Psoas muscle (tissue), 8 donors: ENCODE measurements at regions of chr1 and their contacts with region 1.

Region 1: DNA sequence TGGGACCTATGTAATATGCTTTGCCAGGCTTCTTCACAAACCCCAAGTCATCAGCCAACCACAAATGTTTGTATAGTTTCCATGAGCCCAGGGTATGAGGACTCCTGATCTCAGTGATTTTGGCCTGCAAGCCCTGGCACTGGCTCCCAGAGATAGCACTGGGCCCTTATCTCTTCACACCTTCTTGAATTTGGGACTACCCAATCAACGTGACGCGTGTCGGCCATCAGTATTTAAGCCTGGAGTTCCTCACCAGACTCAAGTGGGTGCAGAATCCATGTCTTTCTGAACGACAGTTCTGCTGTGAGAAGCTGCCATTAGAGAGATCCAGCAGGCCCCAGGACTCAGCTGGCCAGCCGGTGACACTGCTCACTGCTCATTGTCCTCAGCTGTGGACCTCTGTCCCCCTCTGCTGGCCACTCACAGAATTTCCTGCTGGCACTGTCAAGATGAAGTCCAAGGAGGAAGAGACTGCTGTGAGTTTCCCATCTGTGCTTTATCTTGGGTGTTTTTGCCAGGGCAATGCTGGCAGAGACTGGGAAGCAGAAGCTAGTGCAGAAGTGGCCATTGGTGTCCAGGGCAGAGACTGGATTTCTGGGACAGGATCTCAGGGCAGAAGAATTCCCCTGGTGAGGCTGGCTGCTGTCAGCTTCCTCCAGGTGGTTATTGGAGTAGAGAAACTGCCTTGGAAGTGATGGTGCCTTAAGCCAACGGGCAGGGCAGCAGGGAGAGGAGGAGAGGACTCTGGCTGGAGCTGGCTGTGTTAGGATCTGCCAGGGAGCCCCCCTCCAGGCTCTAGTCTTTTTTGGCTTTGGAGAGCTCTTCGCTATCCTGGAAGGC is 28.4 kb downstream of the TMCC2 start:
- DNase-seq: peak; percentile 89 to 95
- ATAC-seq: peak; percentile 73 to 85 (median 80)
- H3K4me3 ChIP-seq: no peak overlapping the region
- H3K27ac ChIP-seq: peak overlapping the region; percentile 57
- H3K4me1 ChIP-seq: peaks cover 67% of the 10 kb centered on the region
- H3K27me3 ChIP-seq: no peaks in the 10 kb centered on the region
- CTCF ChIP-seq: peak; percentile 98

Region 2: DNA sequence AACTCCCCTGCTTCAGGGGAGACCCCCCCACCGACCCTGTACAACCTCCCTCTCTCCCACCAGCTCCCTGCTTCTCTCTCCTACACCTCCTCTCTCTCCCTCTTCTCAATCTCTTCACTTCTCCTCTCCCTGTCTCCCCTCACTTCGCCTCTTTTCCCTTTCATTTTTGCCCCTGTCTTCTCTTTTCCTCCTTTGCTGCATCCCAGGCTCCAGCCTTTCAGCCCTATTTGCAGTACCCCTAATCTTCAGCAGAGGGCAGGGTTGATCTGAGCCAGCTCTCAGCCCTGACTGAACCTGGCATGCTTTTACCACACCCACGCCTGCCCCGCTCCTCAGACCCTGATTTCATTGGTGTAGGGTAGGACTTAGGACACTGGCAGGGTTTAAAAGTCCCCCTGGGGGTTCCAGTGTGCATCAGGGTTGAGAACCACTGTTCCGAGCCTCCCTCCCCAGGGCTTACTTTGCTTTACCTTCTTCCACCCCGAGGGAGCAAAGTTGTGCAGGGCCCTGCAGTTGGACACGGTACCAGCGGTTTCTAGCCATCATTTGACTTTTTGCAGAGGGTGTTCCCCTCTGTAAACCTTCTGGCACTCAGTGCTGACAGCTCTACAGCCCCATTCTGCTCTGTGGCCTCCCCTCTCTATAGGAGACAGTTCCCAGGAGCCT is 280.5 kb before region 1 on chr1:
- intact Hi-C with region 1: loop called in 1 of 2 experiments (anchors 10 kb)
- DNase-seq: no peak
- ATAC-seq: peak; percentile 75 to 90 (median 83)
- H3K4me3 ChIP-seq: no peak overlapping the region
- H3K27ac ChIP-seq: no peak overlapping the region
- H3K4me1 ChIP-seq: no peaks in the 10 kb centered on the region
- H3K27me3 ChIP-seq: peaks cover 0 to 11% (median 0%) of the 10 kb centered on the region in 3 donors
- CTCF ChIP-seq: peak; percentile 79

Region 3: GRCh38 chr1:204989266-204990058 is 266.7 kb before region 1 on chr1:
- intact Hi-C with region 1: loop called in 1 of 2 experiments (anchors 5 kb)
- DNase-seq: peak; percentile 48 to 83
- ATAC-seq: peak; percentile 90 to 96 (median 93)
- H3K4me3 ChIP-seq: no peak overlapping the region
- H3K27ac ChIP-seq: no peak overlapping the region
- H3K4me1 ChIP-seq: no peaks in the 10 kb centered on the region
- H3K27me3 ChIP-seq: peaks cover 0 to 22% (median 2%) of the 10 kb centered on the region in 3 donors
- CTCF ChIP-seq: peak; percentile 84

Region 4: DNA sequence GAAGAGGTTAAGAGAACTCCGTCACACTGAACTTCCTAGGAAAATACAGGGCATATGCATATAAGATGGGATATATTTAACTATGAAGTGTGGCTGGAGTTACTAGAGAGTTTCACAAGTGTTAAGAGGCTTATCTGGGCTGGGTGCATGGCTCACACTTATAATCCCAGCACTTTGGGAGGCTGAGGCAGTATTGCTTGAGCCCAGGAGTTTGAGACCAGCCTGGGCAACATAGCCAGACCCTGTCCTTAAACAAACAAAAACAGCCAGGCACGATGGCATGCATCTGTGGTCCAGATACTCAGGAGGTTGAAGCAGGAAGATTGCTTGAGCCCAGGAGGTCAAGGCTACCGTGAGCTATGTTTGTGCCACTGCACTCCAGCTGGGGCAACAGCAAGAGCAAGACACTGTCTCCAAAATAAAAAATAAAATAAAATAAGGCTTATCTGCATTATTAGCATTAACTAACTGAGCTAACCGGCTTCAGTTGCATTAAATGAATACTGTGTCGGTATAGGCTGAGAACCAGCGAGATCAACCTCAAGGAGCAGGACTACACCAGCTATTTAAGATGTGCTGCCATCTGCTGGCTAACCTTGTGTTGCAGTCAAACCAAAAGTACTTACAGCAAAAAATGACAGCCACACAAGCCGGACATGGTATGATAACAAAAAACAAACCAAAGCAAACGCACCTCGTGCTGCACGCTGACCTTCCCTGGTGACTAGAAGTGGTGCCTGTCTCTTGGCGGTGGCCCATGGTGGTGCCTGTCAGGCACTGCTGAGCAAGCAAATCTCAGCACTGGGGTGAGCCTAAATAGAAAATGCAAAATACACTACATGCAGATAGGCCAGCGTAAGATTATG is 114.7 kb before region 1 on chr1:
- intact Hi-C with region 1: loop called in 1 of 2 experiments (anchors 10 kb)
- DNase-seq: peak; percentile 58 to 80
- ATAC-seq: peak; percentile 75 to 90 (median 84)
- H3K4me3 ChIP-seq: peak overlapping the region; percentile 20
- H3K27ac ChIP-seq: no peak overlapping the region
- H3K4me1 ChIP-seq: peaks cover 15% of the 10 kb centered on the region
- H3K27me3 ChIP-seq: no peaks in the 10 kb centered on the region
- CTCF ChIP-seq: peak; percentile 81

Region 5: DNA sequence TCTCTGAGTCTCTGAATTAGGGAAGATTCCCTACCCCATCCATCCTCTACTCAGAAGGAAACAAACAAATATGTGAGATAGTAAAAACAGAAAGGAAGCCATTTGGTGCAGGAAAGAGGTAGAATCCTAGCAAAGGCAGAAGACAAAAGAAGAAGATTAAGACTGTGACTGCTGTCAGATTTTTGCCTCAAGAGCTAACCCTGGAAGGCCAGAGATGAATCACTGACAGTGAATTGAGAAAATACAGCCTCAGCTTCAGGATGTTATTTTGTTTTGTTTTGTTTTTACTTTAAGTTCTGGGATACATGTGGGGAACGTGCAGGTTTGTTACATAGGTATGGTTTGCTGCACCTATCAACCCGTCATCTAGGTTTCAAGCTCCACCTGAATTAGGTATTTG is 76.3 kb before region 1 on chr1:
- intact Hi-C with region 1: loop called in 1 of 2 experiments (anchors 5 kb)
- DNase-seq: no peak
- ATAC-seq: no peak
- H3K4me3 ChIP-seq: no peak overlapping the region
- H3K27ac ChIP-seq: no peak overlapping the region
- H3K4me1 ChIP-seq: peaks cover 59% of the 10 kb centered on the region
- H3K27me3 ChIP-seq: no peaks in the 10 kb centered on the region
- CTCF ChIP-seq: no peak

Region 6: GRCh38 chr1:205190845-205191577 is 65.2 kb before region 1 on chr1:
- intact Hi-C with region 1: no loop called
- DNase-seq: no peak
- ATAC-seq: peak in 3 of 4 donors; percentile 45 to 51 (median 48)
- H3K4me3 ChIP-seq: no peak overlapping the region
- H3K27ac ChIP-seq: no peak overlapping the region
- H3K4me1 ChIP-seq: peaks cover 43% of the 10 kb centered on the region
- H3K27me3 ChIP-seq: no peaks in the 10 kb centered on the region
- CTCF ChIP-seq: no peak

Region 7: GRCh38 chr1:205229399-205229871 is 26.7 kb before region 1 on chr1:
- intact Hi-C with region 1: loop called (anchors 1 to 5 kb)
- DNase-seq: peak; percentile 61 to 84
- ATAC-seq: peak; percentile 90 to 94 (median 92)
- H3K4me3 ChIP-seq: peak overlapping the region; percentile 74
- H3K27ac ChIP-seq: peak overlapping the region; percentile 81
- H3K4me1 ChIP-seq: peaks cover 33% of the 10 kb centered on the region
- H3K27me3 ChIP-seq: no peaks in the 10 kb centered on the region
- CTCF ChIP-seq: peak; percentile 28